ENCODE measurements at regions of chr15 and their contacts with region 1.

Region 1: DNA sequence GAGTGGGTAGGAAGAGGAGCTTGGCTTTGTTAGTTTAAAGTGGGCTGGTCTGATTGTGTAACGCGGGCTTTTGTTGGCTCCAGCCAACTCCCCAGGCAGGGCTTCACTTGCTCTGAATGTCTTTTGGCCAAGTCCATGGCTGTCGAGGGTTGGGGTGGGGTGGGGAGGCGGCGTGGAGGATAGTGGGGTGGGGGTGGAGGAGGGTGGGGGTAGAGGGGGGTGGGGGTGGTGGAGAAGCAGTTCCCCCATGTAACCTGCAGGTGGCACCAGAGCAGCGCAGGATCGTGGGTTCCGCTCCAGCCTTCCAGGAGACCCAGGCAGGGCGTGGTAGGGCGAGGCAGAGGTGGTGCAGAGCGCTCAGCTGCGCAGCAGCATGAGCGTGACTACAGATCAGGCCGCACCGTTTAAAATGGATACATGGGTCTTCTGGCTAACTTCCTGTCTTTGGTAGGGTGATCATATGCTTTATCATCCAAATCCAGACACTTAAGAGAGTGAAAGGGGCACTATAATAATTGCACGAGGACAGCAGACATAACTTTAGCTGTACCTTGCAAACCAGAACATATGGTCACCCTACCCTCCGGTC is 28.3 kb downstream of the GOLGA6A start:
- DNase-seq: peak; percentile 82

Region 2: DNA sequence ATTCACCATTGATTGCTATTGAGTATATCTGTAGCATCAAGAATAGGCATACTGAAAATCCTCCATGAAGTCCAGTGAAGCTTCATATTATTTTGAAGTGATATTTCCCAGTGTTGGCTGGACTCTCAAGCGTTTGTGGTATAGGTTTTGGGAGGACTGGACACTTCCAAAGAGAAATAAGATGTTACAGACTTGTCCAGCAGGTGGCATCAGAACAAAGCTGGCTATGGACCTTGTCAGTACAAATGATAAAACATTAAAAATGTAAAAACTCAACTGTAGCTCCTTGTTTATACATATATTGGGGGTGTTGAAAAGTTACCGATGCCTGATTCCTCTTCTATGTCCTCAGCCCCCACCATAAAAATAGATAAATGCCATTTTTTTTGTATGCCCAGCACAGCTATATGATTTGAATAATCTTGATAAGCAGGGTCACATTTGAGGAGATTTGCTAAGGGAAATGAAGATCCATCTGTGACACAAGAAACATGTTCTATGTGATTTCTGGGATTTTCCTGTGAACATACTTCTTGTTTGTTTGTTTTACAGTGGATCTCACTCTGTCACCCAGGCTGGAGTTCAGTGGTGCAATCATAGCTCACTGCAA is 1454.1 kb before region 1 on chr15:
- in situ Hi-C with region 1: loop called (anchors 10 kb)
- DNase-seq: peak; percentile 73

Measured in KBM-7 (cell line).